ENCODE measurements at regions of chr1 and their contacts with region 1.

Region 1: DNA sequence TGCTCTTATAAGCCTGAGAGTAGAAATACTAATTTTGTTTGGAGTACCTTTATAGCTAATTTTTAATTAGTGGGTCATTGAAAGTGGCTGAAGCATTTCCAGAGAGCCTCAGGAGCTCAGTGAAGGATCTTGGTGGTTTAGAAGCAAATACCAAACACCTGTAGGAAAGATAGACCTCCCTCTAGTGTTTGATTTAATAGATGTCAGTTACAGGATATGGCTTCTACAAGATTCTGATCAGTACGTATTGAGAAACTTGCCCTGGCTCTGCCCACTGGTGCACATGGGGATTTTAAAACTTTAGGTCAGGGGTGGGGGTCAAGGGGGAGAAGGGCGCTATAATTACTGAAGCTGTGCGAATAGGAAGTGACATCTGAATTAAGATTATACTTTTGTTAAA is 122.2 kb downstream of the POU2F1 start:
- DNase-seq: peak; percentile 29
- CTCF ChIP-seq: peak; percentile 44

Region 2: DNA sequence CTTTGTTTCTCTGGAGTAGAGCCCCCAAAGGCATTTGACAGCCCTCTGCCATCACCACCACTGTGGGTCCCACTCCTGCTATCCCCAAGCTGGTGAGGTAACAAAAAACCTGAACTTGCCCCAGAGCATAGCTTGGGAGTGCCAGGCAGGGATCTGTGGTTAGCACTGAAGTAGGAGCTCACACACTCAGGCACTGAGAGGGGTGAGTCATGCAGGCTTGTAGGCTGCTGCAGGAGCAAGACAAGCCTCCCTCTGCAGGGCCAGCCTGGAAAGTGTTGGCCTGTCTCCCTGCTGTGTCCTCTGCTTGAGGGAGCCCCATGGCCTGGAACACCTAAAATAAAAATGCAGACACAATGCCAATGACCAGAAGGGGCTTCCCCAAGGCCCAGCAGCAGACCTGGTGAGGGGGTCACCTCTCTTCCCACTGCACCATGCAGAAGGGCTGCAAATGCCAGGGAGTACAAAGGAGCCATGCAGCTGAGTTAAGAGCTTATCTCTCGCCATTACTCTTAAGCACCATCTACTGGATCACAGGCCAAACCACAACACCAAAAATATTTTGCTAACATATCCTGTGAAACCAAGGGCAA is 612.5 kb before region 1 on chr1:
- in situ Hi-C with region 1: no loop called
- DNase-seq: no peak
- CTCF ChIP-seq: no peak

Region 3: DNA sequence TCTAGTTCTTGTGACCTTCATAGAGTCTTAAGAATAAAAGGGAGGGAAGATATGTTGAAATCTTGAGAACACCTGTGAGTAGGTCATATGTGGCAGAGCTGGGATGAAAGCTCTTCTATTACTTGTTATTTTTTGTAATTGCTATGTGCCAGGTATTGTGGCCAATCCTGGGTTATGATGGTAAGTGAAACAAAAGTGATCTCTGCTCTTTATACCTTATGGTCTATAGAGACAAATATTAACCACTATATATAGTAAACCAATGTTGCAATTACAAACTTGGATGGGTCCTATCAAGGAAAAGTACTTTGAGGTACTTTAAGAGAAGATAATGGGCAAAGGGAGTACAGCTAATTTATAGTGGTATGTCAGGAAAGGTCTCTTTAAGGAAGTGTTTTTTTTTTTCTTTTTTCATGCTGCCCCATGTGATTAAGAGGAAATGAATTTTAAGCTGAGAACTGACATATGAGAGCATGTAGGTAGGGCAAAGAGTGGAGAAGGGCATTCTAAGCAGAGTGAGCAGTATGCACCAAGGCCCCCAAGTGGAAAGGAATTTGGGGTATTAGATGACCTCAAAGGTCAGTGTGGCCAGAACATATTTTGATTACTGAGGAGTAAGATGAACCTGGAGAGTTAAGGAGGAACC is 78.9 kb before region 1 on chr1:
- in situ Hi-C with region 1: loop called (anchors 5 kb)
- DNase-seq: no peak
- CTCF ChIP-seq: no peak

Region 4: DNA sequence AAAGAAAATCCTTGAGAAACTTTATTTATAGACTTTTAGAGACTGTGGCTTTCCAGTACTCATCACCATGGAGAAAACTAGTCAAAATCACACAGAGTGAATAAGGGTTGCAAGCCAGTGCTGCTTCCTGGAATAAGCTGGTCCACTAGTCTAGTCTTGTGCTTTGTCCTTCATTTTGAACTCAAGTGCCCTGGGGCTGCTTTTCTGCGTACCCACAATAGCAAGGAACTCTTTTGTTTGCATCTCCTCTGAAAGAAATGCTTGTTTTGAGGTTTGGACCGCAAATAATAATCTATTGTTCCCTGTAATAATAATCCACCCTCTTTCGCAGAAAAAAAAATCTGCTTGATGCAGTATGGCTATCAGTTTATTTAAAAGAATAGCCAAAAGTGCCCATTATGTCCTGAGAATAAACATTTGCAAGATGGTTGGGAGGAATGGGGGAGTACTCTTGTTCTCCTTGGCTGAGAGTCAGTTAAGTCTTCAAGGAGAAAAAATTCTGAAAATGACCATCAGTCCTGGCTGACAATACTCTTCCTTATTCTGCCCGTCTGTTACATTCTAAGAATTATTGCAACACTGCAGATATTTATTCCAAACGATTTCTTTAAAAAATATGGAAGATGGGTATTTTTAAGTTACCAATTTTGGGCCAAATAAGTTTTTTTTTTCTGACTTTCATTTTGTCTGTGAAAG is 420.8 kb after region 1 on chr1:
- in situ Hi-C with region 1: no loop called
- DNase-seq: no peak
- CTCF ChIP-seq: no peak

Measured in GM13977 (cell line).